ENCODE measurements at regions of chr3 and their contacts with region 1.

Region 1: DNA sequence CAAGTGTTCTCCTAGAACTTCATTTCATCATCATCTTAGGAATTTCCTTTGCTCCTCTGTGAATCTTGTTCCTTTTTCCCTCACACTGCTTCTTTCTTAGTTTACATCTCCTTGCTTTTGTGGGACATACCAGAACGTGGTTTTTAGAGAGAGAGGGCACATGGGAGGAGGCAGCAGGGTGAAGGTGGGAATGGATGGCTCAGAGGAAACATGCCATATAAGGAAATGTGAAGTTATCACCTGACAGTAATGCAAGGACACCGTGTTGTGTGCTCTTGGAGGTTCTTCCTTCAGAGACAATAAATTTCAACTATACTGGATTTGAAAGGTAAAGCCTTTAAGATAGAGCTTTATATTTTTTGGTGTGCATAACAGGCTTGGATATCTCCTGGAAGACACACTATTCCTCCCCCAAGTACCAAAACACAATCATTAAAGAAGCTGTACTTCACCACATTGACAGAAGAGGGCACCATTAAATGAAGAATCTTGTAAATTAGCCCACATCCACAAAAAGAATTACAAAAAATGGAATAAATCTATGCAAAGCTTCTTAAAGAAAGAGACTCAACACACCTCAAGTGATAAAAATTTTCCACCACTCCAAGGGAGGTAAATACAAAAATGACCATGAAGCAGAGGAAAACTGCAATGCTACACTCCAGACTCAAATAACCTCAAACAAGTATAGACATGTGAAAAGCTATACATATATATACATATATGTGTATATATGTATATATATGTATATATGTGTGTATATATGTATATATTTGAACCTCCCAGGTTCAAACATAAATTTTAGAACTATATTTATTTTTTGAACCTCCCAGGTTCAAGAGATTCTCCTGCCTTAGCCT is 26.1 kb downstream of the RPL39L start:
- DNase-seq: peak; percentile 26
- H3K4me3 ChIP-seq: no peak overlapping the region
- CTCF ChIP-seq: peak; percentile 35

Region 2: DNA sequence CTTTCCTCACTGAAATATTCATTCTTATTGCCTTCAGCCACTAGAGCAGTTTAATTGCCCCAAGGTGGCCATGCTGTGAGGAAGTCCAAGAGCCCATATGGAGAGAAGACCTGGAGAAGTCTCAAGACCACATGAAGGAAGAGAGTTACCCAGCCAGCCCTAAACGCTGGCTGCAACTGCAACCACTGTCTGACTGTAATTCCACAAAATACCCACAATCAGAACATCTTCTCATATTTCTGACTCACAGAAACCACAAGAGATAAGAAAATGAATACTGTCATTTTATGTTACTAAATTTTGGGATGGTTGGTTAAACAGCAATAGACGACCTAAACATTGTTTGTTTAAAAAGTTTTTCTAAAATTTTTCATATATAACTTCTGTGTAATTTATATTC is 571.7 kb after region 1 on chr3:
- in situ Hi-C with region 1: loop called (anchors 5 kb)
- DNase-seq: no peak
- H3K4me3 ChIP-seq: no peak overlapping the region
- CTCF ChIP-seq: no peak